ENCODE measurements at regions of chr12 and their contacts with region 1.

Region 1: GRCh38 chr12:116236148-116236731 is 41.3 kb downstream of the MED13L start:
- DNase-seq: no peak
- ATAC-seq: no peak
- H3K4me3 ChIP-seq: no peak overlapping the region
- H3K27ac ChIP-seq: no peak overlapping the region
- H3K4me1 ChIP-seq: peaks cover 0 to 3% of the 10 kb centered on the region in 2 donors
- H3K27me3 ChIP-seq: no peaks in the 10 kb centered on the region

Region 2: GRCh38 chr12:116015525-116015924 is 220.7 kb before region 1 on chr12:
- intact Hi-C with region 1: loop called in 1 of 2 experiments (anchors 10 kb)
- DNase-seq: no peak
- ATAC-seq: no peak
- H3K4me3 ChIP-seq: no peak overlapping the region
- H3K27ac ChIP-seq: no peak overlapping the region
- H3K4me1 ChIP-seq: peaks cover 0 to 1% of the 10 kb centered on the region in 2 donors
- H3K27me3 ChIP-seq: no peaks in the 10 kb centered on the region

Region 3: GRCh38 chr12:116276652-116277221 is 40.5 kb after region 1 on chr12:
- intact Hi-C with region 1: no loop called
- DNase-seq: peak; percentile 87 to 91
- ATAC-seq: peak; percentile 73
- H3K4me3 ChIP-seq: peak overlapping the region; percentile 94 to 98
- H3K27ac ChIP-seq: peak overlapping the region; percentile 84 to 94
- H3K4me1 ChIP-seq: no peaks in the 10 kb centered on the region
- H3K27me3 ChIP-seq: no peaks in the 10 kb centered on the region

Measured in aorta (tissue), 5 donors.